T-cell (primary cell): ENCODE measurements at regions of chr9 and their contacts with region 1.

Region 1: GRCh38 chr9:131709771-131710454 is 30.0 kb downstream of the RAPGEF1 start:
- DNase-seq: peak in 31 of 35 experiments; percentile 12 to 80 (median 49)
- ATAC-seq: peak; percentile 69 to 93 (median 73)
- H3K4me3 ChIP-seq: no peak overlapping the region
- H3K4me3 Mint-ChIP-seq: peak overlapping the region; percentile 30 to 69 (median 50)
- H3K27ac ChIP-seq: peak overlapping the region; percentile 91
- H3K27ac Mint-ChIP-seq: peak overlapping the region; percentile 92 to 96
- H3K4me1 ChIP-seq: peaks cover 13 to 79% of the 10 kb centered on the region in 2 experiments
- H3K4me1 Mint-ChIP-seq: peaks cover 79 to 89% (median 87%) of the 10 kb centered on the region in 3 donors
- H3K27me3 ChIP-seq: no peaks in the 10 kb centered on the region
- H3K27me3 Mint-ChIP-seq: no peaks in the 10 kb centered on the region

Region 2: DNA sequence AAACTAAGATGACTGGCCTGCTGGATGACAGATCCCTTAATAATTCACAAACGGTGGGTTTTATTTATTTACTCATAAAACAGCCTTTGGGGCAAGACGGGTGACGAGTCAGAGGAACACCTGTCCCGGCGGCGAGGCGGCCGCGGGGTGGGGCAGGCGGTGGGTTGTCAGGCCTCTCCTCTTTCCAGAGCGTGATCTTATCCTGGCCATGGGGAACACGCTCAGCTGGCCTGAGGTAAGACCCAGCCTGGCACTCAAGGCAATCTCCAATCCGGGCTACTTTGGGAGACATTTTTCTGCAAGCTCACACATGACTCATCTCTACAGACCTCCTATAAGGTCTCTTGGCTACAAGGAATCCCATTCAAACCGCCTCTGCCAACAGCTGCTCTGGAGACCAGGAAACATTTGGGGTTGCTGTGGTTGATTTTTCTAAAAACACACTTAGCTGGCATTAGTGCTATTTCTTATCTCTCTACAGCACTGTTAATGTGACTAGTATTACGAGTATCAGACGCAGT is 23.7 kb after region 1 on chr9:
- CTCF ChIA-PET with region 1: interaction called in 1 of 2 experiments, 19 read pairs
- POLR2A ChIA-PET with region 1: interaction called, 6 to 10 read pairs
- DNase-seq: peak in 9 of 35 experiments; percentile 18 to 71 (median 33)
- ATAC-seq: peak; percentile 1 to 7 (median 6)
- H3K4me3 ChIP-seq: peak overlapping the region; percentile 34 to 35
- H3K4me3 Mint-ChIP-seq: peak overlapping the region; percentile 65 to 82 (median 73)
- H3K27ac ChIP-seq: peak overlapping the region; percentile 93
- H3K27ac Mint-ChIP-seq: peak overlapping the region; percentile 88 to 94
- H3K4me1 ChIP-seq: peaks cover 77 to 98% of the 10 kb centered on the region in 2 experiments
- H3K4me1 Mint-ChIP-seq: peaks cover 89 to 93% (median 93%) of the 10 kb centered on the region in 3 donors
- H3K27me3 ChIP-seq: no peaks in the 10 kb centered on the region
- H3K27me3 Mint-ChIP-seq: no peaks in the 10 kb centered on the region

Region 3: GRCh38 chr9:131835151-131835910 is 125.4 kb after region 1 on chr9:
- CTCF ChIA-PET with region 1: no interaction called
- POLR2A ChIA-PET with region 1: no interaction called
- DNase-seq: no peak
- ATAC-seq: no peak
- H3K4me3 ChIP-seq: no peak overlapping the region
- H3K4me3 Mint-ChIP-seq: no peak overlapping the region
- H3K27ac ChIP-seq: no peak overlapping the region
- H3K27ac Mint-ChIP-seq: no peak overlapping the region
- H3K4me1 ChIP-seq: peaks cover 4 to 23% of the 10 kb centered on the region in 2 experiments
- H3K4me1 Mint-ChIP-seq: peaks cover 0 to 21% (median 17%) of the 10 kb centered on the region in 3 donors
- H3K27me3 ChIP-seq: peaks cover 0 to 41% of the 10 kb centered on the region in 2 experiments
- H3K27me3 Mint-ChIP-seq: peaks cover 7 to 23% of the 10 kb centered on the region in 2 donors

Region 4: GRCh38 chr9:132169672-132170392 is 459.9 kb after region 1 on chr9:
- CTCF ChIA-PET with region 1: no interaction called
- POLR2A ChIA-PET with region 1: no interaction called
- DNase-seq: peak in 31 of 35 experiments; percentile 20 to 76 (median 39)
- ATAC-seq: peak; percentile 38 to 71 (median 52)
- H3K4me3 ChIP-seq: no peak overlapping the region
- H3K4me3 Mint-ChIP-seq: no peak overlapping the region
- H3K27ac ChIP-seq: no peak overlapping the region
- H3K27ac Mint-ChIP-seq: no peak overlapping the region
- H3K4me1 ChIP-seq: peaks cover 0 to 5% of the 10 kb centered on the region in 2 experiments
- H3K4me1 Mint-ChIP-seq: peaks cover 0 to under 1% (median under 1%) of the 10 kb centered on the region in 3 donors
- H3K27me3 ChIP-seq: peaks cover 8 to 52% of the 10 kb centered on the region in 2 experiments
- H3K27me3 Mint-ChIP-seq: peaks cover 42% of the 10 kb centered on the region in 2 donors